ENCODE measurements at regions of chr12 and their contacts with region 1.

Region 1: GRCh38 chr12:25712169-25712568 is 159.1 kb upstream of the LMNTD1 start:
- DNase-seq: no peak
- ATAC-seq: no peak
- H3K4me3 ChIP-seq: no peak overlapping the region
- H3K4me3 Mint-ChIP-seq: no peak overlapping the region
- H3K27ac ChIP-seq: no peak overlapping the region
- H3K27ac Mint-ChIP-seq: no peak overlapping the region
- H3K4me1 ChIP-seq: no peaks in the 10 kb centered on the region
- H3K4me1 Mint-ChIP-seq: peaks cover 0 to 5% (median 3%) of the 10 kb centered on the region in 3 donors
- H3K27me3 ChIP-seq: no peaks in the 10 kb centered on the region
- H3K27me3 Mint-ChIP-seq: no peaks in the 10 kb centered on the region

Region 2: GRCh38 chr12:25629341-25629740 is 82.8 kb before region 1 on chr12:
- CTCF ChIA-PET with region 1: no interaction called
- POLR2A ChIA-PET with region 1: no interaction called
- DNase-seq: no peak
- ATAC-seq: no peak
- H3K4me3 ChIP-seq: no peak overlapping the region
- H3K4me3 Mint-ChIP-seq: no peak overlapping the region
- H3K27ac ChIP-seq: no peak overlapping the region
- H3K27ac Mint-ChIP-seq: no peak overlapping the region
- H3K4me1 ChIP-seq: no peaks in the 10 kb centered on the region
- H3K4me1 Mint-ChIP-seq: peaks cover 11 to 33% (median 15%) of the 10 kb centered on the region in 3 donors
- H3K27me3 ChIP-seq: peaks cover 0 to 4% of the 10 kb centered on the region in 2 experiments
- H3K27me3 Mint-ChIP-seq: no peaks in the 10 kb centered on the region

Region 3: DNA sequence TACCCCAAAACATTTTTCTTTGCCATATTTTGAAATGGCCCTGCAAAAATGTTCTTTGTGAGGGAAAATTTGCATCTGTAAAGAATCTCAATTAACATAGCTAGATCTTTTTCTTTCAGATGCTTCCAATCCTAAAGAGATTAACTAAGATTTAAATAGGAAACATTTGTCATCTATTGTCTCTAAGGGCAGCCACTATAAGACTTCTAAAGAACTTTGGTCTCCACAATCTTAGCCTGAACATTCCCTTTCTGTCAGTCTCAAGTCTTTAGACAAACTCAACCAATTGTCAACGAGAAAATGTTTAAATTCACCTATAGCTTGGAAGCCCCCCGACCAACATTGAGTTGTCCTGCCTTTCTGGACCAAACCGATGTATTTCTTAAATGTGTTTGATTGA is 175.2 kb after region 1 on chr12:
- CTCF ChIA-PET with region 1: interaction called in 1 of 2 experiments, 12 read pairs
- POLR2A ChIA-PET with region 1: no interaction called
- DNase-seq: no peak
- ATAC-seq: no peak
- H3K4me3 ChIP-seq: no peak overlapping the region
- H3K4me3 Mint-ChIP-seq: no peak overlapping the region
- H3K27ac ChIP-seq: no peak overlapping the region
- H3K27ac Mint-ChIP-seq: no peak overlapping the region
- H3K4me1 ChIP-seq: no peaks in the 10 kb centered on the region
- H3K4me1 Mint-ChIP-seq: no peaks in the 10 kb centered on the region
- H3K27me3 ChIP-seq: peaks cover 0 to 3% of the 10 kb centered on the region in 2 experiments
- H3K27me3 Mint-ChIP-seq: peaks cover 0 to 7% of the 10 kb centered on the region in 2 donors